ENCODE measurements at regions of chr1 and their contacts with region 1.

Region 1: DNA sequence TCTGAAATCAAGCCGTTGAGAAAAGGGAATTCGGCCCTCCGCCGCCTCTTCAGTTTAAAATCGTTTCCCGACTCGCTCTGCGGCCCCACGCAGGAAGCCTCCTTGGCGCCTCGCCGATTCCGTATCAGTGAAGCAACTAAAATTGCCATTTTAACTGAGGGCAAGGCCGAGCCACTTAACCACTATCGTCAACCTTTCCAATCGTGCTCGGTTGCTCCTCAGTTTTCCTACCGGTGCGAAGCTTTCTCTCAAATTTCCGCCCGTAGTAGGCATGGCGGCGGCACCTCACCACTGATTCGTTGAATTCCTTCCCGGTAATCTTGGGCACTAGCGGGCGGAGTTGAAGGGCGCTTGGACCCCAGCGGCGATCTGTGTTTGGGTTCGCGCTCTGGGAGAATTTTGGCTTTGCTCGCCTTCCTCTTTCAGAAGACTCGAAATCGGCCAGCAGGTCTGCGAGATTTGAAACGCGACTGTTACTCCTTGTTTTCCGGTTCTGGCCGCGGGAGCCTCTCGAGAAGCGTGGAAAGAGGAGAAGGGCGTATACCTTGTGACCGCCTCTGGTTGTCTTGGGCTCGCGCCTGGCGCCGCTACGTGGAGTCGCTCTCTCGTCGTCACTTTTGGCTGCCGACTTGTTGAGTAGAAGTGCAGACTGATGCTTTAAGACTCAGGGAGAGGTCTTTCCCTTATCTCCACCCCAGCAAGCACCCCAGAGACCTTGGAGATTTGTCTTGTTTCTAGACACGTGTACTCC is at the starts of genes CENPL and DARS2:
- ATAC-seq: peak; percentile 89 to 94 (median 92)
- H3K4me3 ChIP-seq: peak within 1 kb of the TSS; percentile 66 to 86 (median 71)
- H3K27ac ChIP-seq: peak within 1 kb of the TSS; percentile 80 to 88
- H3K4me1 ChIP-seq: peaks cover 15 to 18% of the 10 kb centered on the region in 2 donors
- total RNA-seq, gene CENPL: 3.2 to 17.4 (median 6.7) TPM
- total RNA-seq, gene DARS2: 12.7 to 34.6 (median 16.5) TPM

Region 2: DNA sequence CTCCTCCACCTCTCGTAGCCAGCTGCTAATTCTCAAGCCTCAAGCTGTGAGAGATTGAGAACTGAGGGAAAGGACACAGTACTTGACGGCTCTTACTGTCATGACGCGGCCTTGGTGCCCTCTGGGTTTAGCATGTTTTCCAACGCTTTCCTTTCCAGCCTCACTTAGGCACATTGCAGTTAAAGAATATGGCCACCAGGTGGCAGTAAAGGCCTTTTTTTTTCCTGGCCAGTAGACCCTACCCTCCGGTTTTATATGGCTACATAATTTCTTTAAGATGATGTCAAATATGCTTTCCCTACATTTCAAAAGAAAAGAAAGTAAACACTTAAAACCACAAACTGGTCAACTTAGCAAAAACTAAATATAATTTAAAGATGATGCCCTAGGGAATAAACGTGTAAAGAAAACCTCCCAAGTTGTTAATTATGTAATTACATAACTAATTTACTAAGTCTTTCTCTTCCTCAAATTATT is 404.1 kb before region 1 on chr1:
- in situ Hi-C with region 1: loop called in 4 of 9 experiments (anchors 25 kb)
- ATAC-seq: peak; percentile 21 to 99 (median 57)
- H3K4me3 ChIP-seq: no peak overlapping the region
- H3K27ac ChIP-seq: no peak overlapping the region
- H3K4me1 ChIP-seq: no peaks in the 10 kb centered on the region

Region 3: DNA sequence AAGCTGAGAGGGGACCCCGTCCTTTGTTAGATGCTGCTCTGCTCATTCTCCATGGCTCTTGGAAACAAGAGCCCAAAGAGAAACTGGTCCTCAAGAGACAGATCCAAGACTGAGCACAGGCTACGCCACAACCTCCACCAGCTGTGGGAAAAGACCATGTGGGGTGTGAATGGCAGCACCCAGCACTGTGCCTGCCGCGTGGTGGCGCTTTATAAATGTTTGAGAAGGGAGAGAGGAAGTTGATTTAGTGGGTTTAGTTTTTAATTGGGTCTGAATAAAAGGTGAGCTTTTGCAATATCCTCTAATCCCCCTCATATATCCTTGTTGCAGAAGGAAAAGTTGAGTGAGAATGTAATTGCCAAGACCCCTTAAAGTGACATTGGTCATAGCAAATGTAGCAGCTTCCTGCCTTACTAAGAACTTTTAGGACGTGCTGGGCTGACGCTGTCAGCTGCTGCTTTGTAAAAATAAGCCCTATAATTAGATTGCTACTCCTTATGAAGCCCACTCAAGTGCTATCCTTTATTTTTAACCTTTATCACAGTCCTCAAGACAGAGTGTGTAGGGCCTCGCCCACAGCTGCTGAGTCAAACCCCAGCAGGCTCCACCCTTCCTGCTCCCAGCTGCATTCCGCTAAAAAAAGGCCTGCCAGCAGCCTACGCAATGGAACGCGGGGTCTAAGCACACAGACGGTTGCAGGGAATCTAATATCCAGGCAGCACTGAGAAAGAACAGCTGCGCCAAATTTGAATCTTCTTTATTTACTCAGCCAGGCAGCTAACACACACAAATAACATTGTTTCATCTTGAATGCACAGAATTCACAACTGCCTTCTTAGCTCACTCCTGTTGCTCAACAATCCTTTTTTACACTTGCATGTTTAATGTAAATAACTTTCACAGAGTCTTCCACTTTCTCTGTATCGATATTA is 394.8 kb before region 1 on chr1:
- in situ Hi-C with region 1: loop called in 4 of 9 experiments (anchors 25 kb)
- ATAC-seq: peak; percentile 95 to 100 (median 100)
- H3K4me3 ChIP-seq: peak overlapping the region in 1 of 5 donors; percentile 2
- H3K27ac ChIP-seq: peak overlapping the region; percentile 1 to 6
- H3K4me1 ChIP-seq: peaks cover 18 to 31% of the 10 kb centered on the region in 2 donors

Measured in motor neuron (in vitro differentiated cells).